Motor neuron (in vitro differentiated cells): ENCODE measurements at regions of chr5 and their contacts with region 1.

Region 1: DNA sequence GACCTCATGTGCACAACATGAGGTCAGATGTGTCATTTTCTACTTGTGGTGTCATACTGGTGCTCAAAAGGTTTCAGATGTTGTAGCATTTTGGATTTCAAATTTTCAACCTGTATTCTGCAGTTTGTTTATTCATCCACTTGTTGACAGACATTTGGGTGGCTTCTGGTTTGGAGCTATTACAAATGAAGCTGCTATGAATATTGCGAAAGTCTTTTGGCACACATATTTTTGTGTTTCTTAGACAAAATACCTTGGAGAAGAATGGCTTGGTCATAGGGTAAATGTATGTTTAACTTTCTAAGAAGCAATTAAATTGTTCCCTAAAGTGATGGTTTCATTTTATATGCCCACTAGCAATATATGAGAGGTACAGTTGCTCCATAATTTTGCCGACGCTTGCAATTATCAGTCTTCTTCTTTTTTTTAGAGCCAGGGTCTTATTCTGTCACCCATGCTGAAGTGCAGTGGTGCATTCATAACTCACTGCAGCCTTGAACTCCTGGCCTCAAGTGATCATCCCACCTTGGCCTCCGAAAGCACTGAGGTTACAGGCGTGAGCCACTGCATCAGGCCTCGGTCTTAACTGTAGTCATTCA is 70.7 kb upstream of the TRPC7 start:
- ATAC-seq: peak in 2 of 8 experiments; percentile 50 to 67
- H3K4me3 ChIP-seq: no peak overlapping the region
- H3K27ac ChIP-seq: no peak overlapping the region
- H3K4me1 ChIP-seq: no peaks in the 10 kb centered on the region

Region 2: GRCh38 chr5:136686192-136686872 is 250.3 kb after region 1 on chr5:
- in situ Hi-C with region 1: loop called in 1 of 9 experiments (anchors 10 kb)
- ATAC-seq: peak in 4 of 8 experiments; percentile 21 to 100 (median 100)
- H3K4me3 ChIP-seq: no peak overlapping the region
- H3K27ac ChIP-seq: no peak overlapping the region
- H3K4me1 ChIP-seq: no peaks in the 10 kb centered on the region

Region 3: GRCh38 chr5:137375741-137376526 is 939.9 kb after region 1 on chr5:
- in situ Hi-C with region 1: no loop called
- ATAC-seq: peak in 5 of 8 experiments; percentile 14 to 62 (median 45)
- H3K4me3 ChIP-seq: no peak overlapping the region
- H3K27ac ChIP-seq: no peak overlapping the region
- H3K4me1 ChIP-seq: peaks cover 28 to 39% of the 10 kb centered on the region in 2 donors